Mammary epithelial cell (primary cell): ENCODE measurements at regions of chr6 and their contacts with region 1.

Region 1: DNA sequence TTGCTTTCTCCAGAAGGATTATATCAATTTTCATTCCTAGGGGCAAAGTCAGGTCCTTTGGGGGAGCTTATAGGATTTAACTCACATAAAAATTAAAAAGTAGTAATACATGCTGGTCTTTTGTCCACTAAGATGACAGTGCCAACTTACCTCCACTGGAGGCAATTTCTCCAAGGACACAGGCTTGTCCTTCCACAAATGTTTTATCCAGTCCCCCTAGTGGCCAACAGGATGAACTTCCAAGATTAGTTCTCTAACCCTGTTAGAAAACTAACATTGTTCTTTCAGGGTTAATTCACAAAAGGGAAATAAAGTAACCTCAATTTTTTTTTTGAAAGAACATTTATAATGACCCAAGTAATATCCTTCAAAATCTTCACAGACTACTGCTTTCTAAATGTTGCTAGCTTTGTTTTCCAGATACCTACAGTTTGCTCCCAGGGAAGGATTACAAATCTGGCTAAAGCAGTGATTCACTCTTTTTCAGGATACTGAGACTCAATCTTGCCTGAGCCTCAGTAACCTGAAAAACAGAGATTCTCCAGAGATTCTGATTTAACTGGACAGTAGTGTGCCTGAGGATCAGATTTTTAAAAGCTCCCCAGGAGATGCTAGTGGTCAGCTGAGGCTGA is 31.7 kb upstream of the UBR2 start:
- DNase-seq: peak; percentile 40
- H3K4me3 ChIP-seq: no peak overlapping the region
- H3K27ac ChIP-seq: no peak overlapping the region
- H3K4me1 ChIP-seq: no peaks in the 10 kb centered on the region
- H3K27me3 ChIP-seq: peaks cover 1% of the 10 kb centered on the region
- CTCF ChIP-seq: peak; percentile 80 to 88

Region 2: GRCh38 chr6:41976794-41977484 is 555.2 kb before region 1 on chr6:
- CTCF ChIA-PET with region 1: no interaction called
- dilution Hi-C with region 1: no loop called
- in situ Hi-C with region 1: no loop called
- intact Hi-C with region 1: no loop called
- DNase-seq: peak; percentile 49
- H3K4me3 ChIP-seq: no peak overlapping the region
- H3K27ac ChIP-seq: no peak overlapping the region
- H3K4me1 ChIP-seq: peaks cover 10% of the 10 kb centered on the region
- H3K27me3 ChIP-seq: no peaks in the 10 kb centered on the region
- CTCF ChIP-seq: no peak

Region 3: GRCh38 chr6:42239351-42240055 is 292.7 kb before region 1 on chr6:
- CTCF ChIA-PET with region 1: no interaction called
- dilution Hi-C with region 1: no loop called
- in situ Hi-C with region 1: loop called in 1 of 2 experiments (anchors 25 kb)
- intact Hi-C with region 1: loop called (anchors 5 kb)
- DNase-seq: peak; percentile 81
- H3K4me3 ChIP-seq: no peak overlapping the region
- H3K27ac ChIP-seq: peak overlapping the region; percentile 47
- H3K4me1 ChIP-seq: peaks cover 26% of the 10 kb centered on the region
- H3K27me3 ChIP-seq: no peaks in the 10 kb centered on the region
- CTCF ChIP-seq: no peak

Region 4: DNA sequence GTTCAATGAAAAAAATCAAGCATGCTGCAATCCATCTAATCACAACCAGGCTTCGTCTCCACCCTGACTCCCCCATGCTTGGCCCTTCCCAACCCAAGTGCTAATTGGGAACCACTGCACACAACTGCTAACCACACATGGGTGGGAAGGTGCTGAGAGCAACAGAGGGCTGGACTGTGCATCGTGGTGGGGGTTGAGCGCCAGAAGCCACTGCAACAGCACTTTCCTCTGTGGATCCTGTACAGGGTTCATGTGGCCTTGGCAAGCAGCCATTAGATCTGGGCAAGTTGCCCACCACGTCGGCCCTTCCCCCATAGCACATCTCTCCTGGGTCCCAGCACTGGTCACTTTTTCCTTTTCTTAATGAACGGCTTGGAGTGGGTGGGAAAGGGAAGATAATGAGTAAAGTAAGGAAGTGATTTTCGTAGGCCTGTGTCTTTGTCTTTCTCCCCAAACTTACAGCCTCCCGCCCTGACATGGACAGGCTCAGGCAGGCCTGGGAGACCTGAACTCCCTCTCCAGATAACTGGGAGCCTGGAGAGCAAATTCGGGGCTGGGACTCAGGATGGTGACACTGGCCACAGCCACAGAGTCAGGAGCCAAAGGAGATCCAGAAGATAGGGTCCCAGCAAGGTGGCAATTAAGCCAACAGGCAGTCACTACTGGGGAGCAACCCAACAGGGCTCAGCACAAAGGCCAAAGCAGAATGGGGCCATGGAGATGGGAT is 280.1 kb before region 1 on chr6:
- CTCF ChIA-PET with region 1: no interaction called
- dilution Hi-C with region 1: no loop called
- in situ Hi-C with region 1: loop called (anchors 10 to 25 kb)
- intact Hi-C with region 1: no loop called
- DNase-seq: no peak
- H3K4me3 ChIP-seq: no peak overlapping the region
- H3K27ac ChIP-seq: no peak overlapping the region
- H3K4me1 ChIP-seq: peaks cover 27% of the 10 kb centered on the region
- H3K27me3 ChIP-seq: no peaks in the 10 kb centered on the region
- CTCF ChIP-seq: no peak

Region 5: GRCh38 chr6:42260972-42261371 is 271.2 kb before region 1 on chr6:
- CTCF ChIA-PET with region 1: no interaction called
- dilution Hi-C with region 1: no loop called
- in situ Hi-C with region 1: loop called in 1 of 2 experiments (anchors 10 kb)
- intact Hi-C with region 1: loop called (anchors 1 kb)
- DNase-seq: no peak
- H3K4me3 ChIP-seq: no peak overlapping the region
- H3K27ac ChIP-seq: no peak overlapping the region
- H3K4me1 ChIP-seq: no peaks in the 10 kb centered on the region
- H3K27me3 ChIP-seq: no peaks in the 10 kb centered on the region
- CTCF ChIP-seq: peak in 1 of 2 donors; percentile 58

Region 6: DNA sequence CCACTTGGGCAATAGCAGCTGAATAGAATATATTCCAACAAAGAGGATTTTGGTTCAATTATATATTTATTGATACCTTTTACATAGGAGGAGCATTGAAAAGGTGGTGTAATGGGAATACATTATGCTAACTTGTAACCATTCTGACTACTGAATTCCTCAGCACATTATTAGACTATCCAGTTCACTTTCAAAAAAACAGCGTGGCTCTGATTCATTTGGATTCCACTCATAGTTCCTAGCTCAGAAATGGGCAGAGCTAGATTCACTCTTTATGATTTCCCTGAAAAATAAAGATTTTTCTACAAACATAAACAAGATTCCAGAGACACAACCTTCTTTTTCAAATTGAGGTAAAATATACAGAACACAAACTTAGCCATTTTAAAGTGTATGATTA is 71.3 kb before region 1 on chr6:
- CTCF ChIA-PET with region 1: no interaction called
- dilution Hi-C with region 1: no loop called
- in situ Hi-C with region 1: no loop called
- intact Hi-C with region 1: no loop called
- DNase-seq: no peak
- H3K4me3 ChIP-seq: no peak overlapping the region
- H3K27ac ChIP-seq: no peak overlapping the region
- H3K4me1 ChIP-seq: no peaks in the 10 kb centered on the region
- H3K27me3 ChIP-seq: no peaks in the 10 kb centered on the region
- CTCF ChIP-seq: no peak